Testis (tissue), 5 donors: ENCODE measurements at regions of chr19 and their contacts with region 1.

Region 1: GRCh38 chr19:8412783-8413628 is at the start of gene MARCHF2:
- DNase-seq: peak; percentile 97
- H3K4me3 ChIP-seq: peak within 1 kb of the TSS; percentile 69 to 82
- H3K27ac ChIP-seq: no peak within 1 kb of the TSS
- H3K4me1 ChIP-seq: no peaks in the 10 kb centered on the region
- H3K27me3 ChIP-seq: no peaks in the 10 kb centered on the region
- CTCF ChIP-seq: peak; percentile 42 to 68 (median 57)
- POLR2A ChIP-seq: no peak
- total RNA-seq, gene MARCHF2: 62.6 to 84.5 TPM

Region 2: GRCh38 chr19:8505680-8506401 is 92.8 kb after region 1 on chr19:
- intact Hi-C with region 1: loop called (anchors 10 kb)
- DNase-seq: peak; percentile 85
- H3K4me3 ChIP-seq: peak overlapping the region; percentile 54 to 59
- H3K27ac ChIP-seq: no peak overlapping the region
- H3K4me1 ChIP-seq: peaks cover 7% of the 10 kb centered on the region
- H3K27me3 ChIP-seq: no peaks in the 10 kb centered on the region
- CTCF ChIP-seq: peak; percentile 78 to 88 (median 85)
- POLR2A ChIP-seq: no peak